Activated CD8-positive, alpha-beta T cell treated with anti-CD3 and anti-CD28 coated beads for 36 hours (primary cell): ENCODE measurements at regions of chr5 and their contacts with region 1.

Region 1: DNA sequence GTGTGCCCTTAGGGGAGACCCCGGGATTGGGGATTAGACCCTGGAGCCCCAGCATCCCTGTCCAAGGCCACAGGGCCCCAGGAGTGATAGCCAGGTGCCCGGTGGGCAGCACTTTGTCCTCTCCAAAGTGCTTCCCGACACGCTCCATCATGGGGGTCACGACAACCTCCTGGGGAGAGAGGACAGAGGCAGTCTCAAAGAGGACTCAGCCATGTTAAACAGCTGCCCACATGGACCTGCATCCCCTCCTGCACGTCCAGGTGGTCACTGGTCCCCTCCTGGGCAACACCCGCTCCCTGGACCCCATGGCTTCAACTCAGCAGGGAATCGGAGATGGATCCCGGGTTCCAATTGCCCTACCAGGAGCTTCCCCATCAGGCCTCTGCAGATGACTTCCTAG is 20.1 kb upstream of the HNRNPH1 start:
- DNase-seq: no peak
- ATAC-seq: no peak
- H3K4me3 Mint-ChIP-seq: no peak overlapping the region
- H3K27ac Mint-ChIP-seq: no peak overlapping the region
- H3K4me1 Mint-ChIP-seq: no peaks in the 10 kb centered on the region
- H3K27me3 Mint-ChIP-seq: no peaks in the 10 kb centered on the region
- CTCF ChIP-seq: no peak

Region 2: DNA sequence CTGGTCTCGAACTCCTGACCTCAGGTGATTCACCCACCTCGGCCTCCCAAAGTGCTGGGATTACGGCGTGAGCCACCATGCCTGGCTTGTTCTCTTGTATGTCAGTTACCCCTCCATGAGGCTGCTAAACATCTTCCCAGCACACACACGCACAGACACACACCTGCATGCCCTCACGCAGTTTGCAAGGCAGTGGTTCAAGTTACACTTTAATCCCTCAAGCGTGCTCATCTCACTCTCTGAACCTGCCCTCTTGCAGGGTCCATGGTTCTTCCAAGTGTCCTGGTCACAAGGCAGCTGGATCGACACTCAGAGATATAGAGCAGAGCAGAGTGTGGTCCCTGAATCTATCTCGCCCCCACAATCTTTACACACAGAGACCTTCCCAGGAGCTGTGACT is 127.3 kb before region 1 on chr5:
- CTCF ChIA-PET with region 1: no interaction called
- POLR2A ChIA-PET with region 1: no interaction called
- intact Hi-C with region 1: loop called (anchors 2 kb)
- DNase-seq: no peak
- ATAC-seq: no peak
- H3K4me3 Mint-ChIP-seq: no peak overlapping the region
- H3K27ac Mint-ChIP-seq: no peak overlapping the region
- H3K4me1 Mint-ChIP-seq: no peaks in the 10 kb centered on the region
- H3K27me3 Mint-ChIP-seq: no peaks in the 10 kb centered on the region
- CTCF ChIP-seq: no peak